MCF 10A (cell line): ENCODE measurements at regions of chr1 and their contacts with region 1.

Region 1: DNA sequence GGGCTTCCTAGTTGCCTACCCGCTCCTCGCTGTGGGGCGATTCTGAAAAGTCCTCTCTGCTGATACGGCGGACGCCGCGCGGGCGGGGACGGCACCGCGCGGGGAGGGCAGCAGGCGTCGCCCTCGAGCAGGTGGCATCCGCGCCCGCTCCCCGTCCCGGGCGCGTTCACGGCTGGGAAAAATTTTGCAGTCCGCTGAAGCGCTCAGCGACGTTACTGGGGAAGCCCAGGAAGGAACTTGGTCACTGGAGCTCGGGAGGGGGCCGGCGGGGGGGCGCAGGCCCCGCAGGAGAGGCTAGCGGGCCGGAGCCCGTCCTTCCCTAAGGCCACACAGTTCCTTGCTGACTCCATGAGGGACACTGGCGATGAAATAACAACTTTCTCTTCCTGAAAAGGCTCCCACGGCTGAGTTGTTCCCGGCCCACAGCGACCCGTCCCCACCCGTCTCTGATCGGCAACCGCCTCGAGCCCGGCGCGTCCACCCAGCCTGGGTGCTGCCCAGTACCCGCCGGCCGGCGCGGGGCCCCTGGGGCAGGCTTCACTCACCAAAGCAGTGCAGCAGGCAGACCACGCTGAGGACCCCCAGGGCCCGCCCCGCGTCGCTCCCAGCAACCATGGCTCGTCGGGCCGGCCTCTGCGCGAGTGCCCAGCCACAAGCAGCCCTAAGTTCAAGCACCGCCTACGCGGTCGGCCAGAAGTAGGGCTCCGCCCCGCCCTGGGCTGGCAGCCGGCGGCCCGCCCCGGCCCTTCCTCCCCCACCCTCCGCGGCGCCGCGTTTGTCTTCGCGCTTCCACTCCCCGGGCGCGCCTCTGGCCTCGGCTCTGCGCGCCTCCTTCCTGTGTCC is at the start of gene CD58:
- DNase-seq: peak; percentile 86
- H3K4me3 Mint-ChIP-seq: peak within 1 kb of the TSS; percentile 69
- H3K27ac Mint-ChIP-seq: peak within 1 kb of the TSS; percentile 91
- H3K4me1 Mint-ChIP-seq: peaks cover 30% of the 10 kb centered on the region
- H3K27me3 Mint-ChIP-seq: no peaks in the 10 kb centered on the region
- CTCF ChIP-seq: peak; percentile 74
- total RNA-seq, gene CD58: 11.0 and 13.4 TPM in 2 replicates

Region 2: GRCh38 chr1:116498789-116499628 is 71.6 kb before region 1 on chr1:
- CTCF ChIA-PET with region 1: interaction called, 5 read pairs
- POLR2A ChIA-PET with region 1: interaction called, 3 read pairs
- intact Hi-C with region 1: loop called (anchors 2 kb)
- DNase-seq: peak; percentile 73
- H3K4me3 Mint-ChIP-seq: no peak overlapping the region
- H3K27ac Mint-ChIP-seq: no peak overlapping the region
- H3K4me1 Mint-ChIP-seq: peaks cover 17% of the 10 kb centered on the region
- H3K27me3 Mint-ChIP-seq: no peaks in the 10 kb centered on the region
- CTCF ChIP-seq: peak; percentile 86

Region 3: DNA sequence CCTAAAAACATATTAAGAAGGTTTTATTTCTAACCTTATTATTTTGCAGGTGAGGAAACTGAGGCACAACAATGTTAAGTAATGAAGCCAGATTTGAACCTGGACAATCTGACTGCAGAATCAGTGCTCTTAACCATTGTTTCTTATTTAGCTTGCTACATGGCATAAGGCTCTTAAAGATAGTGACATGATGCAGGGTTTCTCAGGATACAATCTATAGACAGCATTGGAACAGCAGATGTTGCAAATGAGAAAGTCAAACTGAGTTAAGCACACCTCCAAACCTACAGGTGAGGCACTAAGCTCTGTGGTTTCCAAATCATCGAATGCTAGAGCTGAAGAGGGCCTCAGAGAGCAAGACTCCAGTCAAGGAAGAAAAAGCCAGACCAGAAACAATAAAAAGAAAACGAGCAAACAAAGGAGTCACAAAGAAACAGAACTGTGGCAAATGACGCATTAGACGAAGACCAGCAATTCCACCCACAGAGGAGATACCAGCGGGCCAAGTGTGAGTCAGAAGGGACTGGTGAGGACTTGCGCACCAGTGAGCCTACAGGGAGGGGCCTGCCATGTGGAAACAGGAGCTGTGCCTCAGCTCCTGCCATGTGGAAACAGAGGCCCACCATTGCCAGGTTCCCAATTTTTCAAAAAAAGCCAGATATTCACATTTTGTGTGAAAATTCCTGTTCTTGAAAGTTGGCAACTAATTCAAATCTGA is 14.1 kb before region 1 on chr1:
- CTCF ChIA-PET with region 1: interaction called, 8 read pairs
- POLR2A ChIA-PET with region 1: interaction called, 37 read pairs
- intact Hi-C with region 1: loop called (anchors 1 kb)
- DNase-seq: peak; percentile 99
- H3K4me3 Mint-ChIP-seq: peak overlapping the region; percentile 11
- H3K27ac Mint-ChIP-seq: peak overlapping the region; percentile 84
- H3K4me1 Mint-ChIP-seq: peaks cover 25% of the 10 kb centered on the region
- H3K27me3 Mint-ChIP-seq: no peaks in the 10 kb centered on the region
- CTCF ChIP-seq: no peak

Region 4: GRCh38 chr1:116724765-116725375 is 154.3 kb after region 1 on chr1:
- CTCF ChIA-PET with region 1: interaction called, 14 read pairs
- POLR2A ChIA-PET with region 1: interaction called, 3 read pairs
- intact Hi-C with region 1: loop called (anchors 1 kb)
- DNase-seq: peak; percentile 86
- H3K4me3 Mint-ChIP-seq: no peak overlapping the region
- H3K27ac Mint-ChIP-seq: no peak overlapping the region
- H3K4me1 Mint-ChIP-seq: peaks cover 7% of the 10 kb centered on the region
- H3K27me3 Mint-ChIP-seq: no peaks in the 10 kb centered on the region
- CTCF ChIP-seq: peak; percentile 69

Region 5: GRCh38 chr1:116817582-116818064 is 247.0 kb after region 1 on chr1:
- CTCF ChIA-PET with region 1: interaction called, 5 read pairs
- POLR2A ChIA-PET with region 1: no interaction called
- intact Hi-C with region 1: loop called (anchors 1 kb)
- DNase-seq: peak; percentile 77
- H3K4me3 Mint-ChIP-seq: no peak overlapping the region
- H3K27ac Mint-ChIP-seq: no peak overlapping the region
- H3K4me1 Mint-ChIP-seq: peaks cover 10% of the 10 kb centered on the region
- H3K27me3 Mint-ChIP-seq: no peaks in the 10 kb centered on the region
- CTCF ChIP-seq: peak; percentile 56

Region 6: DNA sequence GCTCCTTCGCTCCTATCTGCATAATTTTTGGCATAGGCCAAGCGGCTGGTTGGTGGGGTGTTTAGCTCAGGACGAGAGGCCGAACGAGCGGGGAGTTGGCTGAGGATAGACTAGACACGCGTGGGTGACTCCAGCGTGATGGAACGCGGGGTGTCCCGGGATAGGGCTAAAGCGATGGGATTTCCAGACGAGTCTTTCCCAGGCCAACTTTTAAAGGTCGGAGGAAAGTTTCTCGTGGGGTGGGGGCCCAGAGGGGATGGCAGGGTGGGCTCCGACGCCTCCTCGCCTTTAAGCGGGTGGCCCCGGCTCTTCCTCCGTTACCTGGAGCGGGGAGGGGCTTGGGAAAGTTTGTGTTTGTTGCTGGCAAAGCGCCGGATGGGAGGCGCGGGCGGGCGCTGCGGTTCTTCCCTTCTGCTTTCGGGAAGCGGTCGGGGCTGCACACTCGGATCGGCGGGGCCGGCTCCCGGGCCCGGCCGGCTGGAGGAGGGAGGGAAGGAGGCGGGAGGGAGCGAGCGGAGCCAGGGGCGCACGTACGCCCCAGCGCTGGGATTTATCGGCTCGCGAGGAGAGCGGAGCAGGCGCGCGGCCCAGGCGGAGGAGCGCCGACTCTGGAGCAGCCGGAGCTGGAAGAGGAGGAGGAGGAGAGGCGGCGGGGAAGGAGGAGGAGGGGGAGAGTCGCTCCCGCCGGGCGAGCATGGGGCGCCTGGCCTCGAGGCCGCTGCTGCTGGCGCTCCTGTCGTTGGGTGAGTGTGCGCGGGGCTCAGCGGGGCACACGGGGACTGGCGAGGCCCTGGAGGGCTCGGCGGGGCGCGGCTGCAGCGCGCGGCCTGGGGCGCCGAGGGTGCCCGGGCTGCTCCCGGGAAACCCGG is 339.2 kb after region 1 on chr1 and contains the start of gene PTGFRN:
- CTCF ChIA-PET with region 1: interaction called, 3 read pairs
- POLR2A ChIA-PET with region 1: interaction called, 4 read pairs
- intact Hi-C with region 1: loop called (anchors 5 kb)
- DNase-seq: peak; percentile 74
- H3K4me3 Mint-ChIP-seq: no peak within 1 kb of the TSS
- H3K27ac Mint-ChIP-seq: peak within 1 kb of the TSS; percentile 85
- H3K4me1 Mint-ChIP-seq: peaks cover 10% of the 10 kb centered on the region
- H3K27me3 Mint-ChIP-seq: no peaks in the 10 kb centered on the region
- CTCF ChIP-seq: no peak
- total RNA-seq, gene PTGFRN: 45.2 and 61.0 TPM in 2 replicates